ENCODE measurements at regions of chr11 and their contacts with region 1.

Region 1: DNA sequence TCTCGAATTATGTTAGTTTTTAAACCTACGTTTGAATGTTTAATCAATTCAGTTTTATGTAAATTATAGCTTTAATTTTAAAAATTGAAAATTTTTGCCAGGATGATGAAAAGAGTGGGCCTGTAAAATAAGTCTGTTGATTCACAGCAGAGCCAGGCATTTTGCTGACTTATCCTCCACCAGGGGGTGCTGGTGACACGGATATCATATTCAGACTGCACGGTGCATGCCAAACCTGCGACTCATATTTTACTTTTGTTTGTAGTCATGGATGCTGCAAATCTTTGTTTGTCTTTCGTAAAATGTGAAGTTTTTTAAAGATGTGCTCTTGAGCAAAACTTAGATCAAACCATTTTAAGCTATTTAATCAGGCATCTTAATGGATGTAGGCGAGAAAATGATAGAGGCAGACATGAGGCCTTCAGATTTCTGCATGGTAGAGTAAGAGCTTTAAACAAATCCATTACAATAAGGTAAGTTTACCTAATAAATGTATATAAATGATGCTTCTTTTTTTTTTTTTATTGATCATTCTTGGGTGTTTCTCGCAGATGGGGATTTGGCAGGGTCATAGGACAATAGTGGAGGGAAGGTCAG is 3.6 kb upstream of the OR8B3 start:
- DNase-seq: peak in 1 of 2 donors; percentile 18
- ATAC-seq: peak in 1 of 4 donors; percentile 56
- H3K4me3 ChIP-seq: no peak overlapping the region
- H3K27ac ChIP-seq: no peak overlapping the region
- H3K4me1 ChIP-seq: no peaks in the 10 kb centered on the region
- H3K27me3 ChIP-seq: no peaks in the 10 kb centered on the region
- CTCF ChIP-seq: peak; percentile 46

Region 2: GRCh38 chr11:124421043-124421442 is 18.6 kb after region 1 on chr11:
- intact Hi-C with region 1: loop called in 1 of 2 experiments (anchors 2 kb)
- DNase-seq: no peak
- ATAC-seq: no peak
- H3K4me3 ChIP-seq: no peak overlapping the region
- H3K27ac ChIP-seq: no peak overlapping the region
- H3K4me1 ChIP-seq: no peaks in the 10 kb centered on the region
- H3K27me3 ChIP-seq: peaks cover 0 to 4% (median 0%) of the 10 kb centered on the region in 3 donors
- CTCF ChIP-seq: no peak

Region 3: GRCh38 chr11:124673333-124674167 is 271.1 kb after region 1 on chr11 and contains the starts of genes SIAE and SPA17:
- intact Hi-C with region 1: no loop called
- DNase-seq: peak; percentile 94 to 96
- ATAC-seq: peak; percentile 99
- H3K4me3 ChIP-seq: peak within 1 kb of the TSS; percentile 77
- H3K27ac ChIP-seq: peak within 1 kb of the TSS; percentile 75
- H3K4me1 ChIP-seq: peaks cover 14% of the 10 kb centered on the region
- H3K27me3 ChIP-seq: no peaks in the 10 kb centered on the region
- CTCF ChIP-seq: no peak
- total RNA-seq, gene SIAE: 15.7 to 21.8 (median 19.1) TPM
- total RNA-seq, gene SPA17: 0.32 to 1.1 (median 0.73) TPM

Measured in psoas muscle (tissue), 8 donors.